CD4-positive, alpha-beta T cell (primary cell): ENCODE measurements at regions of chr4 and their contacts with region 1.

Region 1: DNA sequence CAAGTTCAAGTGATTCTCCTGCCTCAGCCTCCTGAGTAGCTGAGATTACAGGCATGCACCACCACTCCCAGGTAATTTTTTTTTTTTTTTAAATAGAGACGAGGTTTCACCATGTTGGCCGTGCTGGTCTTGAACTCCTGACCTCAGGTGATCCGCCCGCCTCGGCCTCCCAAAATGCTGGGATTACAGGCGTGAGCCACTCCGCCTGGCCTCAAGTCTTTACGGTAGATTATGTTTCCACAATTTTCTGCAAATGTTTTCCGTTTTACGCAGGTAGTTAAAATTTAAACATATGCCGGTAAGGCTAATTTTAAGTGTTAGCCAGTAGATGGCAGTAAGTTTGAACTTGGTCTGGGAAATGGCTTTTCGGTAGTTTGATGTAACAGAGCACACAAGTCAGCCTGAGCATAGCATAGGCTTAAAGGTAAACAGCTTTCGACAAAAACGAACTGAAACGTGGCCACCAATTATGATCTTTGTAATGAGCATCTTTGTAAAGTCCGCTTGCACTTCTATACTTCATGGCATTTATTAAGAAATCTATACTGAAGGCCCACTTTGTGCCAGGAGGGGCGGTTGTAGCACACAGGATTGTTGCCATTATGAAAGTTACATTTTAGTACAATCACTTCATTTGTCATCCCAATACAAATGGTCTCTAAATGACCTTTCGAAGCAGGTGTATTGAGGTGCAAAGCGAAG is 31.1 kb downstream of the CCKAR start:
- DNase-seq: peak in 4 of 14 experiments; percentile 6 to 60 (median 54)
- ATAC-seq: peak; percentile 50
- H3K4me3 ChIP-seq: no peak overlapping the region
- H3K4me3 Mint-ChIP-seq: peak overlapping the region; percentile 77
- H3K27ac ChIP-seq: no peak overlapping the region
- H3K27ac Mint-ChIP-seq: peak overlapping the region; percentile 64
- H3K4me1 ChIP-seq: no peaks in the 10 kb centered on the region
- H3K4me1 Mint-ChIP-seq: peaks cover 28% of the 10 kb centered on the region
- H3K27me3 ChIP-seq: no peaks in the 10 kb centered on the region
- H3K27me3 Mint-ChIP-seq: no peaks in the 10 kb centered on the region
- CTCF ChIP-seq: peak; percentile 58

Region 2: GRCh38 chr4:26583865-26584652 is 124.9 kb after region 1 on chr4 and contains the start of gene TBC1D19:
- CTCF ChIA-PET with region 1: interaction called, 5 read pairs
- POLR2A ChIA-PET with region 1: interaction called, 13 read pairs
- intact Hi-C with region 1: loop called in 1 of 2 experiments (anchors 10 kb)
- DNase-seq: peak; percentile 78 to 93 (median 86)
- ATAC-seq: peak; percentile 87
- H3K4me3 ChIP-seq: peak within 1 kb of the TSS; percentile 76
- H3K4me3 Mint-ChIP-seq: peak within 1 kb of the TSS; percentile 96
- H3K27ac ChIP-seq: peak within 1 kb of the TSS; percentile 81 to 85
- H3K27ac Mint-ChIP-seq: peak within 1 kb of the TSS; percentile 95
- H3K4me1 ChIP-seq: peaks cover 11% of the 10 kb centered on the region
- H3K4me1 Mint-ChIP-seq: peaks cover 28% of the 10 kb centered on the region
- H3K27me3 ChIP-seq: no peaks in the 10 kb centered on the region
- H3K27me3 Mint-ChIP-seq: peaks cover 3% of the 10 kb centered on the region
- CTCF ChIP-seq: no peak
- total RNA-seq, gene TBC1D19: 4.0 to 4.8 TPM